Naive thymus-derived CD8-positive, alpha-beta T cell (primary cell): ENCODE measurements at regions of chr3 and their contacts with region 1.

Region 1: GRCh38 chr3:152268555-152269425 is at the start of gene MBNL1:
- DNase-seq: peak; percentile 67 to 93 (median 82)
- ATAC-seq: peak; percentile 55 to 65
- H3K4me3 Mint-ChIP-seq: peak within 1 kb of the TSS; percentile 77 to 99 (median 98)
- H3K27ac Mint-ChIP-seq: peak within 1 kb of the TSS; percentile 92 to 99 (median 98)
- H3K4me1 Mint-ChIP-seq: peaks cover 34 to 67% (median 61%) of the 10 kb centered on the region in 4 donors
- H3K27me3 Mint-ChIP-seq: no peaks in the 10 kb centered on the region
- polyA plus RNA-seq, gene MBNL1: 298 to 370 (median 331) TPM

Region 2: DNA sequence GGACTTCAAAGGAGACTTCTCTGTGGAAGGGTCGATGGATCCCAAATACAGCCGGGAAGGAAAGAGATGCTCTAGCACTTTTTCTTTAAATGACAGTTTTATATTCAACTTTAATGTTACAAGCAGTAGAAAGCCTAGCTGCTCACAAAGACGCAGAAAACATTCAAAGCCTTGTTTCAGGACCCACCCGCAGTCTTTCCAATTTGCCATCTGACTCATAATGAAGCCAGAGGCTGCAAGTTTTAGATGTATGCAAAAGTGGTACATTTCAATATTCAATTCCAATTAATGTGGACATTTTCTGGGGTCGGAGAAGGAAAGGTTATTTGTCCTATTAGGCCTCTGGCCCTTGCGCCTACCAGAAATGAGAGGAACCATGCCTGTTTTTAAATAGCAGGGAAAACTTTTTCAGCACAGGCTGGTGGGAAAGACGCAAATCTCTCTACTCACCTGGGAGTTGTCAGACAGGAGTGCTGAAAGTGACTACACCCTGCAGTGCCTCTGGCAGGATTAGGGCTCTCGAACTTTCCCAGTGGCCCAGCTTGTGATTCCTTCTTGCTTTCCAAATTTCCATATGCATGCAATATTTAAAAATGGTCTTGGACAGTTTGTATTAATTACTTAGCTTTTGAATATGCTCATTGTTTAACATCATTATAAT is 117.4 kb before region 1 on chr3:
- POLR2A ChIA-PET with region 1: no interaction called
- DNase-seq: no peak
- ATAC-seq: no peak
- H3K4me3 Mint-ChIP-seq: no peak overlapping the region
- H3K27ac Mint-ChIP-seq: no peak overlapping the region
- H3K4me1 Mint-ChIP-seq: no peaks in the 10 kb centered on the region
- H3K27me3 Mint-ChIP-seq: peaks cover 0 to 3% (median 0%) of the 10 kb centered on the region in 5 donors

Region 3: GRCh38 chr3:152183473-152183872 is 85.3 kb before region 1 on chr3:
- POLR2A ChIA-PET with region 1: interaction called, 59 read pairs
- DNase-seq: peak; percentile 15 to 79 (median 58)
- ATAC-seq: peak; percentile 94
- H3K4me3 Mint-ChIP-seq: peak overlapping the region in 7 of 10 donors; percentile 9 to 70 (median 53)
- H3K27ac Mint-ChIP-seq: peak overlapping the region; percentile 38 to 89 (median 78)
- H3K4me1 Mint-ChIP-seq: peaks cover 24 to 57% (median 52%) of the 10 kb centered on the region in 4 donors
- H3K27me3 Mint-ChIP-seq: no peaks in the 10 kb centered on the region

Region 4: GRCh38 chr3:152205097-152205593 is 63.6 kb before region 1 on chr3:
- POLR2A ChIA-PET with region 1: interaction called, 67 read pairs
- DNase-seq: peak in 2 of 10 donors; percentile 42 to 44
- ATAC-seq: peak; percentile 62 to 66
- H3K4me3 Mint-ChIP-seq: peak overlapping the region; percentile 55 to 96 (median 90)
- H3K27ac Mint-ChIP-seq: peak overlapping the region; percentile 40 to 99 (median 94)
- H3K4me1 Mint-ChIP-seq: peaks cover 25 to 86% (median 66%) of the 10 kb centered on the region in 4 donors
- H3K27me3 Mint-ChIP-seq: no peaks in the 10 kb centered on the region

Region 5: GRCh38 chr3:152235709-152236298 is 33.0 kb before region 1 on chr3:
- POLR2A ChIA-PET with region 1: interaction called, 123 read pairs
- DNase-seq: no peak
- ATAC-seq: no peak
- H3K4me3 Mint-ChIP-seq: peak overlapping the region in 6 of 10 donors; percentile 25 to 69 (median 38)
- H3K27ac Mint-ChIP-seq: peak overlapping the region in 9 of 10 donors; percentile 24 to 91 (median 79)
- H3K4me1 Mint-ChIP-seq: peaks cover 29 to 78% (median 73%) of the 10 kb centered on the region in 4 donors
- H3K27me3 Mint-ChIP-seq: no peaks in the 10 kb centered on the region

Region 6: GRCh38 chr3:152258448-152259393 is 10.1 kb before region 1 on chr3:
- POLR2A ChIA-PET with region 1: interaction called, 194 read pairs
- DNase-seq: peak in 9 of 10 donors; percentile 29 to 86 (median 59)
- ATAC-seq: peak; percentile 68 to 74
- H3K4me3 Mint-ChIP-seq: peak overlapping the region; percentile 60 to 88 (median 82)
- H3K27ac Mint-ChIP-seq: peak overlapping the region; percentile 93 to 99 (median 96)
- H3K4me1 Mint-ChIP-seq: peaks cover 33 to 88% (median 84%) of the 10 kb centered on the region in 4 donors
- H3K27me3 Mint-ChIP-seq: no peaks in the 10 kb centered on the region

Region 7: GRCh38 chr3:152298393-152299242 is 29.8 kb after region 1 on chr3:
- POLR2A ChIA-PET with region 1: interaction called, 11 read pairs
- DNase-seq: peak in 9 of 10 donors; percentile 34 to 85 (median 73)
- ATAC-seq: peak; percentile 62 to 76
- H3K4me3 Mint-ChIP-seq: peak overlapping the region; percentile 61 to 88 (median 80)
- H3K27ac Mint-ChIP-seq: peak overlapping the region; percentile 90 to 97 (median 93)
- H3K4me1 Mint-ChIP-seq: peaks cover 36 to 97% (median 70%) of the 10 kb centered on the region in 4 donors
- H3K27me3 Mint-ChIP-seq: no peaks in the 10 kb centered on the region

Region 8: DNA sequence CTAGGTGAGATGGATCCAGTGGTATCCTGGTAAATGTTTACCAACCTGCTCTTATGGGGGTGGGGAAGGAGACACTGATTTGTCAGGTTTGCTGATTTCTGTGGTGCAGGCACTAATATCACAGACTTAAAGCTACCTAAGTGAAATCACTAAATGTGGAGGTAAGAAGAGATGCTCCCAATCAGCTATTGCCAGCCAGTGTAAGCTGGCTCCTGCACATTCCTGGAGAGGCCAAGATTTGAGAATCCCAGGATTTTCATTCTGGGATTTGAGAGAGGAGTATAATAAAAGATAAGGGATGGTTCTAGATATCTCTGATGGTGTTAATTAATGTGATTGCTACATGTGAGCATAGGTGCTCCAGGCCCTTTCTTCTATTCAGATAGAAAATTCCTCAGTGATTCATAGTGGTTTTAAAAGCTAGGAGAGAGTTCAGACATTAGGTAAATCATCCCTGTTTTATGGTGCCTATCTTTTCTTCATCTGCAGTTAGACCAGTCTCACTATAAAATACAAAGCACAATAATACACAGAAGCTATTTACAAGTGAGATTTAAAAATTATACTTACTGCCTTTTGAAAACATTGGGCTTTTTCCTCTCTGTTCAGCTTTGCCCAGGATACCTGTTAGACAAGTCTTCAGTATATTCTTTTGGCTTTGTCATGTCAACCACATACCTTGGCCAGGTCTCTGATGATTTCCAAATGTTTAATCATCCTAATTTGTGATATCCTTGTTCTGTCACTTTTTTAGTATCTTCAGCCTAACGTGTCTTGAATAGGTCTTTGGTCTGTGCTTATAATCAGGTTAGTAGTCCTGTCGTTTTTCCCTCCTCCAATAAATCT is 90.8 kb after region 1 on chr3:
- POLR2A ChIA-PET with region 1: no interaction called
- DNase-seq: no peak
- ATAC-seq: no peak
- H3K4me3 Mint-ChIP-seq: peak overlapping the region in 5 of 10 donors; percentile 0 to 44 (median 17)
- H3K27ac Mint-ChIP-seq: peak overlapping the region in 9 of 10 donors; percentile 16 to 89 (median 66)
- H3K4me1 Mint-ChIP-seq: peaks cover 29 to 86% (median 77%) of the 10 kb centered on the region in 4 donors
- H3K27me3 Mint-ChIP-seq: no peaks in the 10 kb centered on the region